IMR-90 (cell line): ENCODE measurements at regions of chrX and their contacts with region 1.

Region 1: DNA sequence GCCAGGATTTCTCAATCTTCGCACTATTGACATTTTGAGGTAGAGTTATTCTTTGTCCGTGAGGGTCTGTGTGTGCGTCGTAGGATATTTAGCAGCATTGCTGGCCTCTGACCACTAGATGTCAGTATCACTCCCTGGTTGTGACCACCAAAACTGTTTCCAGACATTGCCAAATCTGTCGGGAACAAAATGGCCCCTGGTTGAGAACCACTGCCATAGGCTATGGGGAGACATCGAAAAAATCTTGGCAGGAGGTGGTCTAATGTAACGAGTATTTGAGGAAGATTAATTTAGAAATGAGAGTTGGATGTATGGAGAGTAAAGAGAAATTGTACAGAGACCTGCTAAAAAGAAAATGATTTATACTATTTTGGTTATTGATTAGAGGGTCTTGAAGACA is 108.4 kb downstream of the DOCK11 start:
- DNase-seq: peak; percentile 61
- ATAC-seq: peak; percentile 89
- H3K4me3 ChIP-seq: no peak overlapping the region
- H3K27ac ChIP-seq: no peak overlapping the region
- H3K4me1 ChIP-seq: peaks cover 2% of the 10 kb centered on the region; the same call in 1 of the 2 replicates
- H3K27me3 ChIP-seq: no peaks in the 10 kb centered on the region
- CTCF ChIP-seq: peak; percentile 75
- POLR2A ChIP-seq: no peak
- RAD21 ChIP-seq: peak; percentile 72

Region 2: GRCh38 chrX:118437283-118437682 is 166.7 kb before region 1 on chrX:
- CTCF ChIA-PET with region 1: no interaction called
- POLR2A ChIA-PET with region 1: no interaction called
- dilution Hi-C with region 1: no loop called
- in situ Hi-C with region 1: no loop called
- intact Hi-C with region 1: no loop called
- DNase-seq: no peak
- ATAC-seq: no peak
- H3K4me3 ChIP-seq: no peak overlapping the region
- H3K27ac ChIP-seq: no peak overlapping the region
- H3K4me1 ChIP-seq: no peaks in the 10 kb centered on the region
- H3K27me3 ChIP-seq: no peaks in the 10 kb centered on the region
- CTCF ChIP-seq: no peak
- POLR2A ChIP-seq: no peak
- RAD21 ChIP-seq: no peak

Region 3: DNA sequence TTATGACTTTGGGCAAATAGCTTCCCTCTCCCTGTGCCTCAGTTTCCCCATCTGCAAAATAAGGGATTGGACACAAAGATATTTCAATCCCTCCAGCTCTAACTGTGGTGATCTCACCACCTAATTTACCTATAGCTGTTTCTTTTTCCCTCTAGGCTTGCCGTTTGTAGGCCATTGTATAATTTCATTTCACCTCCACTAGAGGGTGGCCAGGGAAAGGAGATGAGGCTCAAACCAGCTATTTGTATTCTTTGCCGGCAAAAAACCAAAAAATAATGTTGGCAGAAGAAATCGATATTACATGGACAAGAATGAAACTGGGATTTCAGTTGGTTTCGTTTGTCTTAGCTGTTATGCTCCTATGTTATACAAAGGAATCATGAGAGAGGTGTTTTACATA is 144.5 kb before region 1 on chrX:
- CTCF ChIA-PET with region 1: interaction called, 20 read pairs
- POLR2A ChIA-PET with region 1: interaction called, 10 read pairs
- dilution Hi-C with region 1: no loop called
- in situ Hi-C with region 1: loop called (anchors 10 kb)
- intact Hi-C with region 1: loop called (anchors 1 kb)
- DNase-seq: peak; percentile 47
- ATAC-seq: peak; percentile 68; the same call in 1 of the 2 replicates
- H3K4me3 ChIP-seq: no peak overlapping the region
- H3K27ac ChIP-seq: no peak overlapping the region
- H3K4me1 ChIP-seq: no peaks in the 10 kb centered on the region
- H3K27me3 ChIP-seq: no peaks in the 10 kb centered on the region
- CTCF ChIP-seq: peak; percentile 67
- POLR2A ChIP-seq: no peak
- RAD21 ChIP-seq: peak; percentile 76

Region 4: DNA sequence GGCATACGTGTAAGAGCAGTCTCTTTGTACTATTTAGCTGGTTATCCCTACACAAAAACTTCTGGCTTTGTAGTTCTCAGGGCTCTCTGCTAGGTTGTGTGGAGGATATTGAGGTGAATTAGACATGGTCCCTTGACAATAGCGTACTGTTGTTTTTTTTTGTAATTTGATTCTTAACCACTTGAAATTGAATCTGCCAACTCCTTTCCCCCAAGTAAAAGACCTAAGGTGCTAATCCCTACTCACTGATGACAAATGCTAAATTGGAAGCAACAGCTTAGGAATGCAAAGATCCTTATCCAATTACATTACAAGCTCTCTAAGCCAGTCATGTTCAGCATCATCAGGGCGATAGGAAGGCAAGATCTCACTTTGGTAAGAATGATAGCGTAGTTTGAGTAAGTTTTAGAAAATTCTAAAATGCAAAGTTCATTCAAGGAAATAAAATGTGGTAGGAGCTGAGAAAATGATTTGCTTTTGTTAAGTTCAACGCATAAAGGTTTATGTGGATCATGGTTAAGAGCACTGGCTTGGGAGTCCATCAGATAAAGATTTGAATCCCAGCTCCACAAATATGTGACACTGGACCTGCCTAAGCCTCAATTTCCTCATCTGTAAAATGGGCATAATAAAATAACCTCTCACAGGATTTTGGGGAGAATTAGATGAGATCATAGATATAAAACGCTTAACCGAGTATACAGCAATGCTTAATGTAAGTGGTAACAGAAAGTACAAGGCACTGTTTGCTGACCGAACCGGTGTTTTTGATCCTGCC is 69.1 kb before region 1 on chrX:
- CTCF ChIA-PET with region 1: no interaction called
- POLR2A ChIA-PET with region 1: interaction called, 19 read pairs
- dilution Hi-C with region 1: no loop called
- in situ Hi-C with region 1: no loop called
- intact Hi-C with region 1: no loop called
- DNase-seq: no peak
- ATAC-seq: no peak
- H3K4me3 ChIP-seq: no peak overlapping the region
- H3K27ac ChIP-seq: no peak overlapping the region
- H3K4me1 ChIP-seq: peaks cover 2% of the 10 kb centered on the region
- H3K27me3 ChIP-seq: no peaks in the 10 kb centered on the region
- CTCF ChIP-seq: no peak
- POLR2A ChIP-seq: no peak
- RAD21 ChIP-seq: no peak

Region 5: DNA sequence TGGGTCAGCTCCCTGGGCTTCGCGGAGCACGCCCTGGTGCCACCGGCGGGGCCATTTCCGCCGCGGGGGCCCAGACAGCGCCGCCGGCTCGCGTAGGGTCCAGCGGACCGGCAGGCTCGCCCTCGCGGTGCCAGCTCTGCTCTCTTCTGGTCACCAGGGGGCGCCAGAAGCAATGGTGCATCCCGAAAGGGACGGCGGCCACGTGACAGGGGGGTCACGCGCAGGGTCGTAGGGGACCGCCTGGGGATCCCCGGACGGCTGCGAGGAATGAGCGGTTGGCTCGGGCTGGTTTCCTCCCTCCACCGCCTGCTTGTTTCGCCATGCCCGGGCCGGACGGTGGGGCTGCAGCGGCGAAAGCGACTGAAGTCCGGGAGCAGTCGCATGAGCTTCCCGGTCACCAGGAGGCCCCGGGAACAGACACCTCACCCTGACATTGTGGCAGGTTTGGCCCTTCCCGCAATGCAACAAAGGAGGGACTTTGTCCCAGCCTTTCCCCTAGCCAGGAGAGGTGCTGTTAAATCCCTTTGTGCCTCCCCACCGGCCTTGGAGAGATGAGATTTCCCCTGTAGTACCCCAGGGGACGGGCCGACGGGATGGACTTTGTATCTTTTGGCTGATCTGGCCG is 235.5 kb after region 1 on chrX:
- CTCF ChIA-PET with region 1: no interaction called
- POLR2A ChIA-PET with region 1: no interaction called
- dilution Hi-C with region 1: no loop called
- in situ Hi-C with region 1: no loop called
- intact Hi-C with region 1: no loop called
- DNase-seq: peak; percentile 6
- ATAC-seq: peak; percentile 92
- H3K4me3 ChIP-seq: peak overlapping the region; percentile 47
- H3K27ac ChIP-seq: no peak overlapping the region
- H3K4me1 ChIP-seq: no peaks in the 10 kb centered on the region
- H3K27me3 ChIP-seq: peaks cover 5% of the 10 kb centered on the region
- CTCF ChIP-seq: peak; percentile 49
- POLR2A ChIP-seq: no peak
- RAD21 ChIP-seq: no peak